ENCODE measurements at regions of chr1 and their contacts with region 1.

Region 1: GRCh38 chr1:43383449-43383848 is 6.2 kb downstream of the MED8 start:
- DNase-seq: peak; percentile 60
- ATAC-seq: peak; percentile 53
- H3K4me3 ChIP-seq: no peak overlapping the region
- H3K27ac ChIP-seq: no peak overlapping the region
- H3K4me1 ChIP-seq: peaks cover 9% of the 10 kb centered on the region
- H3K27me3 ChIP-seq: no peaks in the 10 kb centered on the region
- CTCF ChIP-seq: peak; percentile 61

Region 2: DNA sequence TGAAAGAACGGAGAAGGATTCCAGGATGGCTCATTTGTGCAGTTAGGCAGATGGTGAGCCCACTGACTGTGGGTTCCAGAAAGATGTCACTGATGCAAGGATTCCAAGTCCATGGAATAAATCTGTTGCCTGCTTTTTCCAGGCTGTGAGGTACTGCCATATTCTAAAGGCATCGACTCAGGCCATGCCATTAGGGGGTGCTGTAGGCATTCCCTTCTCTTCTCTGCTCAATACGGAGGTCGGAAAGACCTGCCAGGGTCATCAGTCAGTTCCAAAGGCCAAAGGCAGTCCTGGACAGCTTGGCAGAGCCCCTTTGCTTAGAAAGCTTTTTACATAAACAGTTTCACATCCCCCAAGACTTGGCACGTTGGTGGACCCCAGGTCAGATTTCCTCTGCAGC is 145.4 kb before region 1 on chr1:
- CTCF ChIA-PET with region 1: no interaction called
- POLR2A ChIA-PET with region 1: interaction called, 12 read pairs
- intact Hi-C with region 1: no loop called
- DNase-seq: peak; percentile 74
- ATAC-seq: peak; percentile 53
- H3K4me3 ChIP-seq: no peak overlapping the region
- H3K27ac ChIP-seq: no peak overlapping the region
- H3K4me1 ChIP-seq: peaks cover 23% of the 10 kb centered on the region
- H3K27me3 ChIP-seq: no peaks in the 10 kb centered on the region
- CTCF ChIP-seq: peak; percentile 82

Region 3: DNA sequence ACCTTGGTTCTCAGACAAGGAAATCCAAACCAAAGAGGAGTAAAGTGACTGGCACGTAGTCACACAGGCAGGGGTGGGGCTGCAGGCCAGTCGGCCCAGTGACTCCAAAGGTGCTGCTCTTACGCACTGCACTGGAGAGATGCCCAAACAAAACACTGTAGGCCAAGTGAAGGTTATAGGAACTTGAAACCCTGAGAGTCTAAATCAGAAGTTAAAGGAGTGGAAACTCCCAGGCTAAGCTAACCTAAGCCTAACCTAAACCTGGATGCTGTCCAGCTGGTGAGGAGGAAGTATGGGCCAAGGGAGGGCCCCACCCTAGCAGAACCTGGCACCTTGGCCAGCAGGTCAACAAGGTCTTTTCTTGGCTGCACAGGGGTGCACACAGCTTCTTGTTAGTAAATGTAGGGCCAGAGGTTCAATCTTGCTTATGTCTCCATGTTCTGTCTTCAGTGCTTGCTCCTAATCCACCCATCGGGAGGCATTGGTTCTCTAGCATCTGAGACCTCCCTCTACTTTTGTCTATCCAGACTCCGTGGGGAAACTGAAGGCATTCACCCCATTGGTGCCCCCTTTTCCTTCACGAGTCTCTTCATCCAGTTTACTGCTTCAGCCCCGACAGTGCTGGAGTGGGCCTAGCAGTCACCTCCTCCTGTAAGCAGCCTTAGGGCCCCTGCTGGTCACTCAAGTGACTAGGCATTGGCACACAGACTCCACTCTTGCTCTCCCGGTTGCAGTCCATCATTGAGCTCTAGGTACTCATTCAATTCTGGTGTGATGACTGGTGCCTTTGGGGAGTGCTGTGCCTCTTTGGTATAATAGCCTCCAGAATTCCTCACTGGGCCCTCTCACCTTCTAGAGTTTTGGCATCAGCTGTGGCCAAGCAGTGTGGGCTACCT is 126.5 kb before region 1 on chr1:
- CTCF ChIA-PET with region 1: no interaction called
- POLR2A ChIA-PET with region 1: no interaction called
- intact Hi-C with region 1: no loop called
- DNase-seq: no peak
- ATAC-seq: no peak; the same call in 1 of the 2 replicates
- H3K4me3 ChIP-seq: no peak overlapping the region
- H3K27ac ChIP-seq: no peak overlapping the region
- H3K4me1 ChIP-seq: no peaks in the 10 kb centered on the region
- H3K27me3 ChIP-seq: no peaks in the 10 kb centered on the region
- CTCF ChIP-seq: no peak

Measured in PC-3 (cell line).